CD4-positive, alpha-beta T cell (primary cell): ENCODE measurements at regions of chr14 and their contacts with region 1.

Region 1: GRCh38 chr14:35687335-35687939 is 121.7 kb downstream of the RALGAPA1 start:
- DNase-seq: peak in 6 of 14 experiments; percentile 1 to 50 (median 33)
- ATAC-seq: peak; percentile 49
- H3K4me3 ChIP-seq: no peak overlapping the region
- H3K4me3 Mint-ChIP-seq: no peak overlapping the region
- H3K27ac ChIP-seq: no peak overlapping the region
- H3K27ac Mint-ChIP-seq: no peak overlapping the region
- H3K4me1 ChIP-seq: no peaks in the 10 kb centered on the region
- H3K4me1 Mint-ChIP-seq: no peaks in the 10 kb centered on the region
- H3K27me3 ChIP-seq: no peaks in the 10 kb centered on the region
- H3K27me3 Mint-ChIP-seq: no peaks in the 10 kb centered on the region
- CTCF ChIP-seq: peak; percentile 79

Region 2: GRCh38 chr14:35140718-35141581 is 546.5 kb before region 1 on chr14:
- CTCF ChIA-PET with region 1: no interaction called
- POLR2A ChIA-PET with region 1: no interaction called
- intact Hi-C with region 1: loop called (anchors 1 to 10 kb)
- DNase-seq: peak in 2 of 14 experiments; percentile 33 to 55
- ATAC-seq: peak; percentile 49
- H3K4me3 ChIP-seq: no peak overlapping the region
- H3K4me3 Mint-ChIP-seq: no peak overlapping the region
- H3K27ac ChIP-seq: no peak overlapping the region
- H3K27ac Mint-ChIP-seq: peak overlapping the region; percentile 80
- H3K4me1 ChIP-seq: no peaks in the 10 kb centered on the region
- H3K4me1 Mint-ChIP-seq: peaks cover 28% of the 10 kb centered on the region
- H3K27me3 ChIP-seq: no peaks in the 10 kb centered on the region
- H3K27me3 Mint-ChIP-seq: no peaks in the 10 kb centered on the region
- CTCF ChIP-seq: peak; percentile 73

Region 3: GRCh38 chr14:35883677-35884293 is 196.3 kb after region 1 on chr14:
- CTCF ChIA-PET with region 1: no interaction called
- POLR2A ChIA-PET with region 1: no interaction called
- intact Hi-C with region 1: no loop called
- DNase-seq: peak in 5 of 14 experiments; percentile 9 to 38 (median 27)
- ATAC-seq: no peak
- H3K4me3 ChIP-seq: no peak overlapping the region
- H3K4me3 Mint-ChIP-seq: no peak overlapping the region
- H3K27ac ChIP-seq: no peak overlapping the region
- H3K27ac Mint-ChIP-seq: no peak overlapping the region
- H3K4me1 ChIP-seq: no peaks in the 10 kb centered on the region
- H3K4me1 Mint-ChIP-seq: no peaks in the 10 kb centered on the region
- H3K27me3 ChIP-seq: no peaks in the 10 kb centered on the region
- H3K27me3 Mint-ChIP-seq: no peaks in the 10 kb centered on the region
- CTCF ChIP-seq: peak; percentile 57